Activated naive CD4-positive, alpha-beta T cell treated with anti-CD3 and anti-CD28 coated beads for 36 hours (primary cell): ENCODE measurements at regions of chr17 and their contacts with region 1.

Region 1: DNA sequence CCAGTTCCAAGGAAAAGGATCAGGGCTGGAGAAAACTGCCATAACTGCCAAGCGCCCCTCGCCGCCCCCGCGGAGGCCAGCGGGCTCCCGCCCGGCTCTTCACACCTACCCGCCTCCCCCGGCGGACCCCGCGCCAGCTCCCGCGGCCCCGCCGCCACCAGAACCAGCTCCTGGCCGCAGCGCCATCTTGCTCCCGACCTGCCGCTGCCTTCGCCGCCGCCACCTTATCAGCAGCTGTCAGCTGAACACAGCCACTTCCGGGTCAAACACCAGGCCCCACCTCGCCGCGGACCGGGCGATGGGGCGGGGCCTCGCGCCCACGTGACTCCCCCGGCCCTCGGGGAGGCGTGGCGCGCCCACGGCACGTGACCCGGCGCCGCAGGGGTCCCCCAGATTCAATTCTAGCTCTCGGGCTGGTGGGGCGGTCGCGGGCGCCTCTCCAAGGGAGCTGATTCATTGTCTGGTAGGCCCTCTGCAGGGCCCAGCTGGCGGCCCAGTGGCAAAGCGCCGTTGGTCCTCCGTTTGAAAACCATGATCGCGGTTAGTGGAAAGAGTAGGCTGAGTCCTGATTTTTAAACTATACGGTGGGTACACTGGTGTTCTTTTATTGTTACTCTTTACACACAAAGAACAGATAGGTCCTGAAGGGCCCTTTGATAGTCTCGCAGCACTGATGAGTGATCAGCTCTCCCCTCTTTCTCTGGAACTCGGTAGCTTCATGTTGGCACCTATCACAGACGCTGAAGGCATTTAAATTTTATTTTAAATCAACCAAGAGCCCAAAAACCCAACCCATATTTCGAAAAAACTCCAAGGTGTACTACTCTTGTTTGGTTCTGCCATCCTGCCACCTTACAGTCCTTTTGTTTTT is at the start of gene SYNRG:
- DNase-seq: peak; percentile 93
- H3K4me3 Mint-ChIP-seq: peak within 1 kb of the TSS; percentile 84
- H3K27ac Mint-ChIP-seq: peak within 1 kb of the TSS; percentile 93
- H3K4me1 Mint-ChIP-seq: peaks cover 36% of the 10 kb centered on the region
- H3K27me3 Mint-ChIP-seq: no peaks in the 10 kb centered on the region
- total RNA-seq, gene SYNRG: 39.1 to 40.1 TPM

Region 2: DNA sequence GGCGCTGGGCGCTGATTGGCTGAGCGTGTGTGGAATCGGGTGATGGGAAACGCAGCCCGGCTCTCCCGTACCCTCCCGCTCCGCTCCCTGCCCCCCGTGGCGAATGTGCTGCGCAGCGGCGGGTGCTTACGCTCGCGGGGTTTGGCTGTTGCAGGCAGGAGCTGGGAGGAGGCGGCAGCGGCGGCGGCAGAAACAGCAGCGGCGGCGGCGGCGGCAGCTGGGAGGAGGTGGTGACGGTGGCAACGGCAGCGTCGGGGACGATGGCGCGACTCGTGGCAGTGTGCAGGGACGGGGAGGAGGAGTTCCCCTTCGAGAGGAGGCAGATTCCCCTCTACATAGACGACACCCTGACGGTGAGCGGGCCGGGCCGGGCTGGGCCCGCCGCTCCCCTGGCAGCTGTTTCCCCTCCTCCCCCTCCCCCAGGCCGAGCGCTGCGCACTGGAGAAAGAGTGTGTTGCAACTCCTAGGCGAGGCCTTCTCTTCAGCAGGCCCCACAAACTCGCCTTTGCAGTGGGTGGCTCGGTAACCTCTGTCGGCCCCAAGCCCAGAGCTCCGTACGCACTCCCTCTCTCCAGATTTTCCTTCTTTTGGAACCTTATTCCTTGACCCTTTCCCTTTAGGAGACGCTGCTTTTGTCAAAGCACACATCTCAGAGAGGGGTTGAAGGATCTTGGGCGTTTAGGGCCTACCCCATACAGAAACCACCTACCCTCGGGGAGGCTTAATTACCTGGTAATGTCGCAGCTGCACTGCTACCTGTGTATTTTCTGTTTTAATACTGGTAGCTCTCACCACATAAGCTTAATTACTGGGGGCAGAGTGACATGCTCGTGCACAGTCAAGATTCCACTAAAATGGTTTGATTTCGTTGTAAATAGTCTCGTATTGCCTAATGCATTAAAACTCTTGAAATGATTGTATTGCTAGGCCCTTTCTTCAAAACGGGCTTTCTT is 1063.7 kb before region 1 on chr17:
- CTCF ChIA-PET with region 1: no interaction called
- intact Hi-C with region 1: loop called (anchors 5 kb)
- DNase-seq: peak; percentile 98
- H3K4me3 Mint-ChIP-seq: peak overlapping the region; percentile 86
- H3K27ac Mint-ChIP-seq: peak overlapping the region; percentile 94
- H3K4me1 Mint-ChIP-seq: peaks cover 44% of the 10 kb centered on the region
- H3K27me3 Mint-ChIP-seq: no peaks in the 10 kb centered on the region

Region 3: GRCh38 chr17:37373530-37374159 is 235.8 kb before region 1 on chr17:
- CTCF ChIA-PET with region 1: interaction called, 6 read pairs
- intact Hi-C with region 1: loop called (anchors 1 kb)
- DNase-seq: peak; percentile 89
- H3K4me3 Mint-ChIP-seq: no peak overlapping the region
- H3K27ac Mint-ChIP-seq: no peak overlapping the region
- H3K4me1 Mint-ChIP-seq: peaks cover 7% of the 10 kb centered on the region
- H3K27me3 Mint-ChIP-seq: no peaks in the 10 kb centered on the region

Region 4: DNA sequence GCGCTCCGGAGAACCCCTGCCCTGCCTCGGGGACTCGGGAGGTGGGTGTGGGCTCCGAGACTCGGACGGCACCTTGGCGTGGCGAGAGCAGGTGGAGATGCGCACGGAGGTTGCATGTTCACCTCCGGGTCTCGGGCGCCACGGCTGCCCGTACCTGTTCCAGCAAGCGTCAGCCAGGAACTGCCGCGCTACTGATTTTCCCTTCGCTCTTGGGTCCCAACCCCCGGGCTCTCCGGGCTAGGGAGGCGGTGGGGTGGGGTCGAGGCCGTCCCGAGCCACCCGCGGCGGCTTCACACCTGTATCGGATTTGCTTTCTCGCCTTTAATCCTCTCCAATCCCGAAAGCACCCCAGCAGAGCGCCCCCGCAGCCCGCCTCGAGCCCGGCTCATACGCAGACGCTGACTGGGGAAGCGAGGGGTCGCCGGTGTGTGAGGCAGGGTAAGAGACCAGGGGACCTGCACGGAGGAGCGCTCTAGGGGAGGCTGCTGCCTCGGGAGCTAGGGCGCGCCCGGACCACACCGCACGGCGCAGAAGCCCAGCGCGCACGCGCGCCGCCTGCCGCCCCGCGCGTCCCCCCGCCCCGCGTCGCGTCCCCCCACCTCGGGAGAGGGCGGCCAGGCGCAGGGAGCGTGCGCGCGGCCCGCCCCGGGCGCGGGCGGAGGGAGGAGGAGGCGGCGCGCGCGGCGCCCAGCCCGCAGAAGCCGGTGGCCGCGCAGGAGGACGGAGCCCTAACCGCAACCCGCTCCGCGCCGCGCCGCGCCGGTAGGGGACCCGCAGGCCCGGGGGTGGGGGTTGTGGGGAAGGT is 120.0 kb before region 1 on chr17 and contains the start of gene DUSP14:
- CTCF ChIA-PET with region 1: no interaction called
- intact Hi-C with region 1: loop called (anchors 2 kb)
- DNase-seq: peak; percentile 71
- H3K4me3 Mint-ChIP-seq: peak within 1 kb of the TSS; percentile 94
- H3K27ac Mint-ChIP-seq: peak within 1 kb of the TSS; percentile 76
- H3K4me1 Mint-ChIP-seq: peaks cover 48% of the 10 kb centered on the region
- H3K27me3 Mint-ChIP-seq: no peaks in the 10 kb centered on the region
- total RNA-seq, gene DUSP14: 7.0 to 7.9 TPM

Region 5: GRCh38 chr17:37570527-37571093 is 38.8 kb before region 1 on chr17:
- CTCF ChIA-PET with region 1: no interaction called
- intact Hi-C with region 1: loop called (anchors 5 kb)
- DNase-seq: peak; percentile 62
- H3K4me3 Mint-ChIP-seq: no peak overlapping the region
- H3K27ac Mint-ChIP-seq: no peak overlapping the region
- H3K4me1 Mint-ChIP-seq: no peaks in the 10 kb centered on the region
- H3K27me3 Mint-ChIP-seq: no peaks in the 10 kb centered on the region

Region 6: GRCh38 chr17:37701496-37701898 is 92.1 kb after region 1 on chr17:
- CTCF ChIA-PET with region 1: no interaction called
- intact Hi-C with region 1: loop called (anchors 5 kb)
- DNase-seq: peak; percentile 70
- H3K4me3 Mint-ChIP-seq: no peak overlapping the region
- H3K27ac Mint-ChIP-seq: no peak overlapping the region
- H3K4me1 Mint-ChIP-seq: peaks cover 20% of the 10 kb centered on the region
- H3K27me3 Mint-ChIP-seq: peaks cover 14% of the 10 kb centered on the region